ENCODE measurements at regions of chr1 and their contacts with region 1.

Region 1: GRCh38 chr1:3275471-3276340 is 178.8 kb upstream of the ARHGEF16 start:
- DNase-seq: peak; percentile 84 to 87
- ATAC-seq: peak; percentile 63
- H3K4me3 ChIP-seq: no peak overlapping the region
- H3K27ac ChIP-seq: peak overlapping the region; percentile 87 to 93
- H3K4me1 ChIP-seq: peaks cover 0 to 2% of the 10 kb centered on the region in 2 donors
- H3K27me3 ChIP-seq: no peaks in the 10 kb centered on the region

Region 2: DNA sequence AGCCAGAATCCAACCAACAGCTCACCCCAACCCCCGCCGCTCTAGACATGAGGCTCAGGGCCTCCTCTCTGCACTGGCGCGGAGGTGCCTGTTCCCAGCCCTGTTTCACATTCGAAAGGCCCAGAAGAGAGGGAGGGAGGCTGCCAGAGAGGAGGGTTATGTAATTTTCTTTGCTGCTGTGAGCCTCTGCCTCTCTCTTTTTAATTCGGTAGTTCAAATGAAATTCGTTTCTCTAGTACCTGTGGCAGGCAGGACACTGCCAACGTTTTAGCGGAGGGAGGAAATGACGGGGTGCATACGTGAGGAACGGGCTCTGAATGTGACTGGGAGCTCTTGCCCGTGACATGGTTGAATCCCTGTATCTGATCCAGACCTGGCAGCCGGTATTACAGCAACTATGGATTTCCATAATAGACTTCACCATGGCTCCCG is 197.3 kb before region 1 on chr1:
- intact Hi-C with region 1: loop called in 1 of 2 experiments (anchors 5 kb)
- DNase-seq: no peak
- ATAC-seq: peak; percentile 33
- H3K4me3 ChIP-seq: no peak overlapping the region
- H3K27ac ChIP-seq: peak overlapping the region; percentile 6 to 86
- H3K4me1 ChIP-seq: no peaks in the 10 kb centered on the region
- H3K27me3 ChIP-seq: no peaks in the 10 kb centered on the region

Region 3: DNA sequence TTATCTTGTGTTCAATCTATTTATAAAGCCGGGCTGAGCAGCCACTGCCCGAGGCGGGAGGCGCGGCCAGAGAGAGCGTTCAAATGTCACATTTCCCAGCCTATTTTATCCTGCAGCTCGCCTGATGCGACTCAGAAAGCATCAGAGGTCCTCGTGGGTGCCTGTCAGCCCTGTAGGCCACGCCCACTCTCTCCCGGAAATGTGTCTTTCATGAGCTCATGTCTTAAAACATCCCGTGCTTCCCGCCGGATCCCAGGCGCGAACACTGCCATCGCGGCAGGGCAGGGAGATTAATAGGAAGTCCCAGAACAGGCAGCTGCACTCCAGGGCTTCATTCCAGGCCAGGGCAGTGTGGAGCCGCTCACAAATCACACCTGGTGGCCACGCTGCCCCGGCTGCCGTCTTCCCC is 89.2 kb before region 1 on chr1:
- intact Hi-C with region 1: loop called in 1 of 2 experiments (anchors 5 kb)
- DNase-seq: peak; percentile 95
- ATAC-seq: peak; percentile 83
- H3K4me3 ChIP-seq: no peak overlapping the region
- H3K27ac ChIP-seq: peak overlapping the region; percentile 85 to 89
- H3K4me1 ChIP-seq: no peaks in the 10 kb centered on the region
- H3K27me3 ChIP-seq: no peaks in the 10 kb centered on the region

Region 4: DNA sequence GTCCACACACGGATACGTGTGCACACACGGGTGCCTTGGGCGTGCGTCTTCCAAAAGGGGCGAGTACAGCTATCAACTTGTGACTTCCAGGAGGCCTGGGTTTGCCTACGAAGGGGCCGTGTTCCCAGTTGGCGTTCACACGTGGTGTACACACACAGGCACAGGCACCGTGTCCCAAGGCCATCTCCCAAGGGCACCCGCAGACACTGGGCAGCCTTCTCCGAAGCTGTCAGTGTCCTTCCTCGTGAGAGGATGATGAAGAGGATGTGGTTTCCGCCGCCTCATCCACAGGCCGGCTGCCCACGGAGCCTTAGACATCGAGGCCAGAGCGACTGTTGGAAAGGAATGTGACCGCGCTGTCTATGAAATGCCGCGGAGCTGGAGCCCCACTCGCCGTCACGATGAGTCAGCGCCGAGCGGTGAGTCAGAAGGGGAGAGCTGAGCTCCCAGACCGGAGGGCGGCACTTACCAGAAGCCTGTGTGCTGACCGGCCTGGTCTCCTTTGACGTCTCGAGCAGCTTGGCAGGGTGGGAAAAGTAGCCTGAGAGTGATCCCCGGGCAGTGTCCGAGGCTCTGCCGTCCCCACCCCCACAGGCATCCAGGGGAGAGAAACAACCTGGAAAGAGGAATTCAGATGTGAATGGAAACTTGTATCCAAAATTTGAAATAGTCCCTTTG is 37.3 kb after region 1 on chr1:
- intact Hi-C with region 1: loop called (anchors 5 kb)
- DNase-seq: peak; percentile 98 to 99
- ATAC-seq: peak; percentile 95
- H3K4me3 ChIP-seq: no peak overlapping the region
- H3K27ac ChIP-seq: peak overlapping the region; percentile 91 to 99
- H3K4me1 ChIP-seq: no peaks in the 10 kb centered on the region
- H3K27me3 ChIP-seq: no peaks in the 10 kb centered on the region

Region 5: DNA sequence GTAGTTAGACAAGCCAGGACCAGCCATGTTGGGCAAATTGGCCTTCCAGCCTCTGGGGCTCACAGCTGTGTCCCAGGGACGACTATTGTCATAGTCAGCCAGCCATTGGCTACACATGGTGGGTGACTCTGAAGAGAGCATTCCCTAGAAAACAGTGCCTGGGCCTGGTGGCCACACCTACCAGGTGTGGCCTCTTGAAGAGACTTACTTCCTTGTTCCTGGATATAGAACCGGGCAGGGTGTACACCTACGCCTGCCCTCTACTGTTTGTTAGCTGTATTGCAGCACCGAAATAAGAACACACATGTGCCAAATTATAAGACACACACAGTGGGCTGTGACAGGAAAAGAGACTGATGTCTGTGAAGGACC is 44.2 kb after region 1 on chr1:
- intact Hi-C with region 1: loop called in 1 of 2 experiments (anchors 5 kb)
- DNase-seq: no peak
- ATAC-seq: no peak
- H3K4me3 ChIP-seq: no peak overlapping the region
- H3K27ac ChIP-seq: peak overlapping the region in 1 of 2 donors; percentile 43
- H3K4me1 ChIP-seq: no peaks in the 10 kb centered on the region
- H3K27me3 ChIP-seq: no peaks in the 10 kb centered on the region

Region 6: GRCh38 chr1:3333903-3334302 is 58.2 kb after region 1 on chr1:
- intact Hi-C with region 1: no loop called
- DNase-seq: no peak
- ATAC-seq: no peak
- H3K4me3 ChIP-seq: no peak overlapping the region
- H3K27ac ChIP-seq: peak overlapping the region in 1 of 2 donors; percentile 76
- H3K4me1 ChIP-seq: peaks cover 0 to 6% of the 10 kb centered on the region in 2 donors
- H3K27me3 ChIP-seq: no peaks in the 10 kb centered on the region